A673 (cell line): ENCODE measurements at regions of chr6 and their contacts with region 1.

Region 1: DNA sequence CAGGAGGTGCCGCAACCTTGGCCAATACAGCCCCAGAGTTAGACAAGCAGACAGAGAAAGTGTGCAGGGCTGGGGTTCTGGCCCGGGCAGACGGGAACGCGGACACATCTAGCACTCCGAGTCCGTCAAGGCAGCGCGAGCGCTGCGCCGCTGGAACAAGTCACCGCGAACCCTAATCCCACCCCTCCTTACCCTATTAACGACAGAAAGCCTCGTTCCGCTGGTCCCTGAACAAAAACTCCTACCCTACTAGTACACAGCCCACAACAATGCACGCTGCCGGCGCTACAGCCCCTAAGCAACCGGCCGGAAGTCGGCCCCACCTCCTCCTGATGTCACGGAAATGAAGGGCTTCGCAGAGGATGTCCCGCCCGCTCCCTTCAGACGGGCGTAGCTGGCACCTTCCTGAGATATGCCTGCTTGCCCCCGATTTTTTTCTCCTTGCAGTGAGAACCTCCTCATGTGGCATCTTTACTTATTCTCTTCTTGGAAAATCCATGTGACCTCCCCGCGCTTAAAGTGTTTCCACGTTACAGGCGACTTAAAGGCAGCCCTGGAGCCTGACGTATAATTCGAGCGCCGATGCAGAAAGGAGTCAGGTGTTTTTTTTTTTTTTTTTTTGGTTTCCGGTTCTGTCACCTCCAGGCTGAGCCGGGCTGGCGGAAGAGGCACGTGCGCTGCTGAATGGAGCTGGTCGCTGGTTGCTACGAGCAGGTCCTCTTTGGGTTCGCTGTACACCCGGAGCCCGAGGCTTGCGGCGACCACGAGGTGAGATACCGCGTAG is at the starts of genes C6orf52 and PAK1IP1:
- DNase-seq: peak; percentile 97
- H3K4me3 ChIP-seq: peak within 1 kb of the TSS; percentile 66
- H3K27ac ChIP-seq: peak within 1 kb of the TSS; percentile 99
- H3K4me1 ChIP-seq: peaks cover 7% of the 10 kb centered on the region
- H3K27me3 ChIP-seq: no peaks in the 10 kb centered on the region
- CTCF ChIP-seq: no peak
- total RNA-seq, gene C6orf52: 0.69 and 1.9 TPM in 2 replicates
- total RNA-seq, gene PAK1IP1: 34.4 and 41.6 TPM in 2 replicates

Region 2: GRCh38 chr6:10534419-10534762 is 160.1 kb before region 1 on chr6:
- CTCF ChIA-PET with region 1: no interaction called
- POLR2A ChIA-PET with region 1: interaction called, 12 read pairs
- intact Hi-C with region 1: no loop called
- DNase-seq: no peak
- H3K4me3 ChIP-seq: no peak overlapping the region
- H3K27ac ChIP-seq: no peak overlapping the region
- H3K4me1 ChIP-seq: no peaks in the 10 kb centered on the region
- H3K27me3 ChIP-seq: no peaks in the 10 kb centered on the region
- CTCF ChIP-seq: no peak